Body of pancreas (tissue), 4 donors: ENCODE measurements at regions of chr13 and their contacts with region 1.

Region 1: DNA sequence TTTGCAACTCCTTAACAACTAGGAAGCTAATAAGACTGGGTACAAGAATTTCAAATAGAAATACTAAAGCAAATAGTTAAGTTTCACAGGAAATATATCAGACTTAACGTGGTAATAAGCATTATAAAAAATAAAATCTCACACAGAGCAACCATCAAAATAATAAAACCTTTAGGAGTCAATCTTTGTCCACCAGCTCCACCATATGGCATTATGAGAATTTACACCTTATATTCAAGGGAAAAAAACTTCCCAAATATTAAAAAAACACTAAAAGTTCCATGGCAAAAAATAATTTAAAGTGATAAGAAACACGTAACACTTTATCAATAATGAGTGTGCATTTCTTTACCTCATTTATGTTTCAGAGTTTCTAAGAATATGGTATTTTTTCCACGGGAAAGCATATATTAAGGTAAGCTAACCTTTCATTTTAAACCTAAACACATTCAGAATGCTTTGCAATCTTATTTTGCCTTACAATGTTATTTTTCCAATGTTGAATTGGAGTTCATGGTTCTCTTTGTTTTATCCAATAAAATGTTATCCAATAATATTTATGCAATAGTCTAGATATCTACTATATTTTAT is 423.2 kb upstream of the SGCG start:
- DNase-seq: no peak
- ATAC-seq: no peak
- H3K4me3 ChIP-seq: no peak overlapping the region
- H3K27ac ChIP-seq: no peak overlapping the region
- H3K4me1 ChIP-seq: no peaks in the 10 kb centered on the region
- H3K27me3 ChIP-seq: peaks cover 0 to 3% of the 10 kb centered on the region in 2 donors
- CTCF ChIP-seq: peak in 5 of 7 experiments; percentile 20 to 40 (median 39)
- POLR2A ChIP-seq: no peak

Region 2: DNA sequence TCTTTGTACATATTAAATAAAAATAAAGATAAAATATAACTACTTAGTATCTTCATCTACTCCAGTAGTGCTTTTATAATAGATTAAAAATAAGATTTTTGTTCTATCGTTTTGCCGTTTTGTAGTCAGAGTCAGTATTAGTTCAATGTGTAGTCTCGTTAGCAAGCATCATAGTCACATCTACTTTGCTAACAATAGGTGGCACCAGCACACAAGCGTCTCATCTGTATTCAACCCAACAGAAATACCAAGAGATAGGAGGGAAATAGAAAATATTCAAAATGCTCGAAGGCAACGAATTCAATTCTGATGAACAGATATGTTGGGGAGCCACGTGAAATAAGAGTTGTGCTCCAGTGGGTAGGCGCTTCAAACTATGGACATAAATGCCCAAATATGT is 1132.3 kb before region 1 on chr13:
- intact Hi-C with region 1: loop called (anchors 10 kb)
- DNase-seq: peak in 2 of 4 donors; percentile 22 to 26
- ATAC-seq: no peak
- H3K4me3 ChIP-seq: no peak overlapping the region
- H3K27ac ChIP-seq: no peak overlapping the region
- H3K4me1 ChIP-seq: no peaks in the 10 kb centered on the region
- H3K27me3 ChIP-seq: no peaks in the 10 kb centered on the region
- CTCF ChIP-seq: peak in 6 of 7 experiments; percentile 15 to 48 (median 42)
- POLR2A ChIP-seq: no peak